H1 (cell line): ENCODE measurements at regions of chr19 and their contacts with region 1.

Region 1: DNA sequence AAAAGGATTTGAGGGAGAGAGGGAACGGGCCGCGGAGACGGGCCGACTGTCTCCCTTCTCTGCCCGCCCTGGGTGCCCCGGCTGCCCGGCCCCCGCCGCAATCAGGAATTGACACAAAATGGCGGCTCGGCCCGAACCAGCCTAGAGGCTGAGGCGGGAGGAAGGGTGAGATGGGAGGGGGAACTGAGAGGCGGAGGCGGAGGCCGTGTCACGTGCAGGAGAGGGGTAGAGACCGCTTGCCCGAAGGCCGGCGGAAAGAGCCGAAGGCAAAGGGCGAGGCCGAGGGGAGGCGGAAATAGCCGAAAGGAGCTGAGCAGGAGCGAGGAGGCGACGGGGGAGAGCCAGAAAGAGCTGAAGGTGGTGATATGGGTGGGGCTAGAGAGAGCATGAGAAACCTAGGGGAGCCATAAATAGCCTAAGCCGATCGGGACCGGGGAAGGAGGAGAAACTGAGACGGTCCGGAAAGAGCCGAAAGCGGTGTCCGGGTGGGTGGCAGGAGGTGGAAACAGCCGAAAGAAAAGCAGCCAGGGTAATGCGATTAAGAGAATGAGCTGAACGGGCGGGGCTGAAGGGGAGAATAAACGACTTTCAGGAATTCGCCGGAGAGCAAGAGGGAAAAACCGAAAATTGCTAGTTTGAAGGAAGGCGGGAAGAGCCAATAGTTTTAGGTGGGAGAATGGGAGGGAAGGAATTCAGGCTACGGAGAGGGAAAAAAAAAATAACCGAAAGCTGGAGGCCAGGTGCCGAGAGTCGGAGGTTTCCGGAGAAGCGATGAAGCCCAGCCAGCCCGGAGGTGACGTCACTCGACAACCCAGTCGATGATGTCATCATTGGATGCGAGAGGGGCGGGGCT is at the start of gene ZC3H4:
- DNase-seq: peak; percentile 99
- H3K4me3 ChIP-seq: peak within 1 kb of the TSS; percentile 83 to 94 (median 89)
- H3K27ac ChIP-seq: peak within 1 kb of the TSS; percentile 99
- H3K4me1 ChIP-seq: peaks cover 4 to 13% (median 11%) of the 10 kb centered on the region in 4 experiments; a peak in 5 of 7 replicates
- H3K27me3 ChIP-seq: no peaks in the 10 kb centered on the region
- CTCF ChIP-seq: no peak
- EP300 ChIP-seq: no peak
- POLR2A ChIP-seq: peak; percentile 69 to 74
- RAD21 ChIP-seq: no peak
- total RNA-seq, gene ZC3H4: 92.0 and 104 TPM in 2 replicates

Region 2: GRCh38 chr19:47075179-47075810 is 37.9 kb before region 1 on chr19:
- CTCF ChIA-PET with region 1: interaction called, 29 read pairs
- POLR2A ChIA-PET with region 1: interaction called, 27 read pairs
- DNase-seq: no peak
- H3K4me3 ChIP-seq: no peak overlapping the region
- H3K27ac ChIP-seq: 0 out of 2 replicates have a peak overlapping the region, but pooled peaks have one; percentile 2
- H3K4me1 ChIP-seq: no peaks in the 10 kb centered on the region
- H3K27me3 ChIP-seq: no peaks in the 10 kb centered on the region
- CTCF ChIP-seq: no peak
- EP300 ChIP-seq: no peak
- POLR2A ChIP-seq: no peak
- RAD21 ChIP-seq: no peak

Region 3: DNA sequence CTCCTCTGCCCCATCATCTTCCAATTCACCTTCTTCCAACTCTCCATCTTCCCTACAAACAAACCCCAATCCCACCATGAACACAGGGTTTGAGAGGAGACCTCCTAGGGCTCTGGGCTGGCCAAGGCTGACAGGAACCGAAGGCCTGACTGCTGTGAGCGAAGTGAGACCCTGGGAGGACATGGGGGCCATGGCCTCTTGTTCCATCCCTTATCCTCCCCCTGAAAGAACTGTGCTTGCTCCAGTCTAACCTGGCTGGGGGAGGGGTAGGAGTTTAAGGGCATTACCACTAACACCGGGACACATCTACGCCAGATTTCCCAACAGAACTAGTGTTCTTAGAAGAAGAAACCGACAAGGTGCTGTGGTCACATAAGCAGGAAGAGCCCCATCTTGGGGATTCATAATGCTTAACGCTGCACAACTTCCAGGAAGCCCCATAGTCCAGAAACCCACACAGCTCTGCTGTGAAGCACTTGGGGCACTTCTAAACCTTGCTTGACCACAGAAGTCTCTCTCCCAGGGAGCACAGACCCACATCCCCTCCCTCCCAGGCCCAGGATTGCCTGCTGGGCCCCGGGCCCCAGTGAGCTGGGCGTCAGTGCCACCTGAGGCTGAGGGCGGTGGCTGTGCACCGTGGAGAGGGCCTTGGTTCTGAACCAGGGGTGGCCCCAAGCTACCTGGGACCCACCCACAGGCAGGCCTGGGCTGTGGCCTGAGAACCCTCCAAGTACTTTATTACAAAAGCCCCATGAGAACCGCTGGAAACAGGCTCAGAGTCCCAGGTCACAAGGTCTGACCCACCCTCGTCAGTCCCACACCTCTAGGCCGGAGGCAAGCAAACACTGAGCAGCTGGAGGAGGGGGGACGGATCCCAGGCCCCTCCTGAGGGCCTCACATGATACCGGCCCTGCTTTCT is 18.4 kb before region 1 on chr19:
- CTCF ChIA-PET with region 1: interaction called, 5 read pairs
- POLR2A ChIA-PET with region 1: interaction called, 209 read pairs
- DNase-seq: no peak
- H3K4me3 ChIP-seq: no peak overlapping the region
- H3K27ac ChIP-seq: no peak overlapping the region; the same call in 1 of the 2 replicates
- H3K4me1 ChIP-seq: peaks cover 2 to 8% (median 4%) of the 10 kb centered on the region in 4 experiments; a peak in 3 of 7 replicates
- H3K27me3 ChIP-seq: no peaks in the 10 kb centered on the region; a peak in 1 of 7 replicates
- CTCF ChIP-seq: no peak
- EP300 ChIP-seq: no peak
- POLR2A ChIP-seq: no peak
- RAD21 ChIP-seq: no peak

Region 4: DNA sequence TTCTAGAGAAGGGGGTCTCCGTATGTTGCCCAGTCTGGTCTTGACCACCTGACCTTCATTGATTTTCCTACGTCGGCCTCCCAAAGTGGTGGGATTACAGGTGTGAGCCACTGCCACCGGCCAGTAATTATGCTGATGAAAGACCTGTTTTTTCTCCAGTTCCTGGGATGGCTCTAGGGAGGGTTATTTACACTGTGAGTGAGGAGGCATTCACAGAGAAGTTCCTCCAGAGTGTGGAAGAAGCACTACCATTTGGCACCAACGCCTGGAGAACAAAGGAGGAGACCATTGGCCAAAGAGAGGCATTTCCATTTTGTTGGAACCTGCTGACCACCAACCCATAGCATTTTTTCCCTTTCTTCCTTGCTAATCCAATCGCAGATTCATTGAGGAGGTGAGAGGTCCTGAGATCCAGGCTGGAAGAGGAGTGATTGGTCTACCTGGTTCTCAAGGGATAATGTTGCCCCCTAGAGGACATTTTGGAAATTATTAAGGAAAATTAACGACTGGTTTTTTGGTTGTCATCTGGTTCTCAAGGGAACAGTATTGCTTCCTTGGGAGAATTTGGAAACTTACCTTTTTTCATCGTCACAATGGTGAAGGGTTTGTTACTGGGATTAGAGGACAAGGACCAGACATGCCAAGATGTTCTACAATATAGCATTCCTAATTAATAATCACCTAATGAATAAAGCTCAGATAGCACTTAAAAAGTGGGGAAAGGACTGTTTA is 11.9 kb after region 1 on chr19:
- CTCF ChIA-PET with region 1: interaction called, 25 read pairs
- POLR2A ChIA-PET with region 1: interaction called, 35 read pairs
- DNase-seq: no peak
- H3K4me3 ChIP-seq: no peak overlapping the region
- H3K27ac ChIP-seq: no peak overlapping the region
- H3K4me1 ChIP-seq: peaks cover 0 to 4% (median 1%) of the 10 kb centered on the region in 4 experiments; a peak in 1 of 7 replicates
- H3K27me3 ChIP-seq: no peaks in the 10 kb centered on the region
- CTCF ChIP-seq: peak in 2 of 3 experiments; percentile 63 to 67; a peak in 2 of 4 replicates
- EP300 ChIP-seq: no peak
- POLR2A ChIP-seq: no peak
- RAD21 ChIP-seq: peak; percentile 81 to 84

Region 5: GRCh38 chr19:47157431-47158321 is 44.5 kb after region 1 on chr19:
- CTCF ChIA-PET with region 1: no interaction called
- POLR2A ChIA-PET with region 1: interaction called, 11 read pairs
- DNase-seq: peak; percentile 66 to 67
- H3K4me3 ChIP-seq: peak overlapping the region in 2 of 4 experiments; percentile 32 to 36; a peak in 4 of 8 replicates
- H3K27ac ChIP-seq: peak overlapping the region; percentile 82
- H3K4me1 ChIP-seq: peaks cover 13 to 21% (median 19%) of the 10 kb centered on the region in 4 experiments
- H3K27me3 ChIP-seq: no peaks in the 10 kb centered on the region
- CTCF ChIP-seq: peak in 1 of 3 experiments; percentile 26; a peak in 1 of 4 replicates
- EP300 ChIP-seq: no peak
- POLR2A ChIP-seq: peak in 1 of 2 experiments; percentile 18; a peak in 1 of 3 replicates
- RAD21 ChIP-seq: 0 out of 4 replicates have a peak, but pooled peaks of 1 of the 2 experiments have one; percentile 2